Activated naive CD4-positive, alpha-beta T cell treated with anti-CD3 and anti-CD28 coated beads for 36 hours (primary cell): ENCODE measurements at regions of chr7 and their contacts with region 1.

Region 1: GRCh38 chr7:104156842-104157277 is 51.0 kb downstream of the ORC5 start:
- DNase-seq: no peak
- H3K4me3 Mint-ChIP-seq: no peak overlapping the region
- H3K27ac Mint-ChIP-seq: no peak overlapping the region
- H3K4me1 Mint-ChIP-seq: no peaks in the 10 kb centered on the region
- H3K27me3 Mint-ChIP-seq: no peaks in the 10 kb centered on the region

Region 2: GRCh38 chr7:103447073-103447951 is 709.5 kb before region 1 on chr7:
- CTCF ChIA-PET with region 1: no interaction called
- intact Hi-C with region 1: loop called (anchors 2 kb)
- DNase-seq: peak; percentile 69
- H3K4me3 Mint-ChIP-seq: no peak overlapping the region
- H3K27ac Mint-ChIP-seq: no peak overlapping the region
- H3K4me1 Mint-ChIP-seq: peaks cover 17% of the 10 kb centered on the region
- H3K27me3 Mint-ChIP-seq: peaks cover 74% of the 10 kb centered on the region

Region 3: DNA sequence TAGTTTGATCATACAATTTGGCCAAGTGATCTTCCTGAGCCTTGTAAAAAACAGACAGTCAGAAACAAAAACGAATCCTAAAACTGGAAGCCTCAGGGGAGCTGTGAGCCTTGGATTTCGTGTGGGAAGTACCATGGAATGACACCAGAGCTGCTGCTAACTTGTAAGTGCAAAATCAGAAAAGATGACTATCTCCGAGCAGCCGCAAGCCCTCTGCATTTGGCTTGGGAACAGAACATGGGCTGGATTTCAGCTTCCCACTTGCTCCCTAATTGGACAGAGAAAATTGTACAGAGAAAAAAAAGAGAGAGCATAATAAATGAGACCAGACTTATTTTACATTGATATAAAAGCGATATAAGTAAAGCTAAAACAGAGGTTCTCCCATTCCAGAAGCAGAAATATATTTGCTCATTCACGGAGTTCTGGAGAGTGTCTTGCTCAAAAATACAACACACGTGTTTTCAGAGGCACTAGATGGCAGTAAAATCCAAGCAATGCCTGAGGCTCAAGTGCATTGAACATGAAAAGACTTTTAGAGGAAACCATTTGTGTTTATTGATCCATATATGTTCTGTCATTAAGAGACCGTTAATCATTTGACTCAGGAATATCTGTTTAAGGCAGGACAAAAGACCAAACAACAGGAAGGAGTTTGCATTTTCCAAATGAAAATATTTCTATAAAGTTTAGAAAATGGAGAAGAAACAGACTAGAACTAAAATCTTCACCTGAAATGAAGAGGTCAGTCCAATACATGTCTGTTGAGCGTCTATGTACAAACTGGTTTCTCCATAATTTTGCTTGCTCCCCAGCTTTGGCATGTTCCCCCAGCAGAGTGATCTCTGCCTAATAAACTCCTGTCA is 632.6 kb before region 1 on chr7:
- CTCF ChIA-PET with region 1: no interaction called
- intact Hi-C with region 1: loop called (anchors 1 kb)
- DNase-seq: no peak
- H3K4me3 Mint-ChIP-seq: no peak overlapping the region
- H3K27ac Mint-ChIP-seq: no peak overlapping the region
- H3K4me1 Mint-ChIP-seq: no peaks in the 10 kb centered on the region
- H3K27me3 Mint-ChIP-seq: peaks cover 2% of the 10 kb centered on the region

Region 4: GRCh38 chr7:103972779-103973434 is 184.0 kb before region 1 on chr7:
- CTCF ChIA-PET with region 1: no interaction called
- intact Hi-C with region 1: no loop called
- DNase-seq: no peak
- H3K4me3 Mint-ChIP-seq: no peak overlapping the region
- H3K27ac Mint-ChIP-seq: no peak overlapping the region
- H3K4me1 Mint-ChIP-seq: no peaks in the 10 kb centered on the region
- H3K27me3 Mint-ChIP-seq: peaks cover 6% of the 10 kb centered on the region

Region 5: GRCh38 chr7:104328296-104328969 is 171.6 kb after region 1 on chr7 and contains the start of gene LHFPL3:
- CTCF ChIA-PET with region 1: no interaction called
- intact Hi-C with region 1: no loop called
- DNase-seq: no peak
- H3K4me3 Mint-ChIP-seq: no peak within 1 kb of the TSS
- H3K27ac Mint-ChIP-seq: no peak within 1 kb of the TSS
- H3K4me1 Mint-ChIP-seq: peaks cover 10% of the 10 kb centered on the region
- H3K27me3 Mint-ChIP-seq: peaks cover 37% of the 10 kb centered on the region
- total RNA-seq, gene LHFPL3: not detected